Posterior cingulate gyrus (tissue), 11 donors: ENCODE measurements at regions of chr2 and their contacts with region 1.

Region 1: DNA sequence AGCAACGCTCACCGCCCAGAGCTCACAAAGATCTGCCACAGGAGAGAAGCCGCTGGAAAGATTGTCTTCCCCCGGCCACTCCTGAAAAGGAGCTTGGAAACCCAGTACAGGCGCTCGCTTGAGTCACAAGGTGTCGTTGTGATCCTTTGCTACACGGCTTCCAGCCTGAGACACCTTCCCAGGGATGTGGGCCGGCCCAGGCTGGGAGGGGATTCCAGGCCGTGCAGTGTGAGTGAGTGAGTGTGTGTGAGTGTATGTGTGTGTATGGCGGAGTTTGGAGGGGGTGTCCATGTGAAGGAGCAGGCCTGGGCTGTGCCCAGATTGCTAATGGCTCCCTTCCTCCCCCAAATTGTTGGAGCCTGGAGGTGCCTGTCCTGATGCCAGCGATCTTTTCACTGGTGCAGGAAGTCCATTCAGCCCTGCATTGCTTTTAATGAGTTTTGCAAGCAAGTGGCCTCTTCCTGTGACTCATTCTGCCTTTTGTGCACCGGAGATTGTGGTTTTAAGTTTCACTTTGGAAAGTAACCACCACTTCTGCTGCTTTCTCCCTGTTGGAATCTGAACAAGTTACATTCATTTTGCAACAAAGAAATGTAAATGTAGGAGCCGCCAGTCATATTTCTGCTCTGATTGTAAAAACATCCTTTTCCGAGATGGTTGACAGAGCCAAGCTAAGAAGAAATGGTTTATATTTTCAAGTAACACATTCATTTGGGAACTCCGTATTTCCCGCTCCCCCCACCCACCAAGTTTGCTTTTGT is 83.7 kb downstream of the LPIN1 start:
- DNase-seq: peak; percentile 43 to 95 (median 74)

Region 2: DNA sequence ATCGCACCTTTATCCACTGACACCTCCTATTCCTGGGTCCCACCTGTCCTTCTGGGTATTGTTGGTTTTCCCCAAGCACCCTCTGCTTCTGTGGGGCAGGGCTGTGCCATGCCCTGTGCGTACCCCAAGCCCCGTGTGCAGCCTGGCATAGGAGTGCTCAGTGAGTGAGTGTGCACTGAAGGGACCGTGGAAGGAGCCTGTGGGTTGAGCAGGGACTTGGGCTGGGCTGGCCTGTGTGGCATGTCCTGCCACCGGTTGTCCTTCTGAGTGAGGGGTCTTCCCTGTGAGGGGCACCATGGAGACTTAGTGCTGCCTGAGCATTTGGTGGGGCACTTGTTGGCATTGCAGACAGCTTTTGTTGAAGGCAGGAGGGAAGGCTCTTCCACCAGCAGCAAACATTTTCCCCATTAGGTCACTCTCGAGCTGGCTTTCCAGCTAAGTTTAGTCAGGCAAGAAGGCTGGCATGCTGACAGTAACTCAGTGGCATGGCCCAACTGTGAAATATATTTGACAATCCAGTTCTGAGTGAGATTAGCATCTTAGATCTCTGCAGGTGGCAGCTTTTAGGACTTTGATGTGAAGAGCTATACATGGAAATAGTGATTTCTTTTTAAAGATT is 19.0 kb before region 1 on chr2:
- intact Hi-C with region 1: no loop called
- DNase-seq: no peak

Region 3: GRCh38 chr2:12076810-12077209 is 246.7 kb after region 1 on chr2:
- intact Hi-C with region 1: no loop called
- DNase-seq: no peak

Region 4: GRCh38 chr2:12169721-12170120 is 339.6 kb after region 1 on chr2:
- intact Hi-C with region 1: loop called (anchors 10 kb)
- DNase-seq: peak in 1 of 10 donors; percentile 13

Region 5: DNA sequence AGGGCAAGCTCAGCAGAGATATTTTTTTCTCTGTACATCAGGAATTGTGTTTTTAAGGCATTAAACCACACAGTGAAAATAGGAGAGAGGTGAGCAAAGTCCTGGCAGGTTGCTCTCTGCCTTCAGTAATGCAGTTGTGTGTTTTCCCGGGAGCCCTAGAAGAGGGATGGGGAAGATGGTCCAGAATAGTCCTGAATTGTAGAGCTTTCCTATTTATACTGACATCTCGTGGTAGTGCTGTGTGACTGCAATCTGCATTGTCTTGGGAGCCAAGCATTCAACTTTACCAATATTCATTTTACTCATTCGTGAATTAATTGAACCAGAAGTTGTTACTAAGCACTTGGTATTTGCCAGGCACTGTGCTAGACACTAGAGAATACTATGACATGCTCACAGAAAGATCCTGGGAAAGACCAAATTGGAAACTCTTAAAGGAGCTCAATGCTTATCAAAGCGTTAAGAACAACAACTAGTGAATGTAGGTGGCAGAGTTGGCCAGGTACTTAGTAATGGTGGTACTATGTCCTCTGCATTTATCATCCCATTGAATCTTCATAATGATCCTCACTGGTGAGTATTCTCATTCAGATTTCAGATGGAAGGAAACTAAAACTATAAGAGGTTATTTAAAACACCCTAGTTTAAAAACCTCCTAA is 1101.2 kb after region 1 on chr2:
- intact Hi-C with region 1: loop called (anchors 5 kb)
- DNase-seq: peak in 1 of 10 donors; percentile 11